ENCODE measurements at regions of chr17 and their contacts with region 1.

Region 1: GRCh38 chr17:36534840-36535668 is at the starts of genes MYO19 and PIGW:
- DNase-seq: peak; percentile 91
- ATAC-seq: peak; percentile 84
- H3K4me3 Mint-ChIP-seq: peak within 1 kb of the TSS; percentile 98
- H3K27ac Mint-ChIP-seq: peak within 1 kb of the TSS; percentile 99
- H3K4me1 Mint-ChIP-seq: peaks cover 39% of the 10 kb centered on the region
- H3K27me3 Mint-ChIP-seq: no peaks in the 10 kb centered on the region
- total RNA-seq, gene MYO19: 110 to 127 TPM
- total RNA-seq, gene PIGW: 11.8 to 13.4 TPM

Region 2: GRCh38 chr17:36524428-36524876 is 10.6 kb before region 1 on chr17:
- CTCF ChIA-PET with region 1: interaction called, 12 read pairs
- POLR2A ChIA-PET with region 1: interaction called, 4 read pairs
- intact Hi-C with region 1: no loop called
- DNase-seq: peak; percentile 29
- ATAC-seq: peak; percentile 91
- H3K4me3 Mint-ChIP-seq: no peak overlapping the region
- H3K27ac Mint-ChIP-seq: peak overlapping the region; percentile 44
- H3K4me1 Mint-ChIP-seq: peaks cover 30% of the 10 kb centered on the region
- H3K27me3 Mint-ChIP-seq: no peaks in the 10 kb centered on the region